ENCODE measurements at regions of chr1 and their contacts with region 1.

Region 1: DNA sequence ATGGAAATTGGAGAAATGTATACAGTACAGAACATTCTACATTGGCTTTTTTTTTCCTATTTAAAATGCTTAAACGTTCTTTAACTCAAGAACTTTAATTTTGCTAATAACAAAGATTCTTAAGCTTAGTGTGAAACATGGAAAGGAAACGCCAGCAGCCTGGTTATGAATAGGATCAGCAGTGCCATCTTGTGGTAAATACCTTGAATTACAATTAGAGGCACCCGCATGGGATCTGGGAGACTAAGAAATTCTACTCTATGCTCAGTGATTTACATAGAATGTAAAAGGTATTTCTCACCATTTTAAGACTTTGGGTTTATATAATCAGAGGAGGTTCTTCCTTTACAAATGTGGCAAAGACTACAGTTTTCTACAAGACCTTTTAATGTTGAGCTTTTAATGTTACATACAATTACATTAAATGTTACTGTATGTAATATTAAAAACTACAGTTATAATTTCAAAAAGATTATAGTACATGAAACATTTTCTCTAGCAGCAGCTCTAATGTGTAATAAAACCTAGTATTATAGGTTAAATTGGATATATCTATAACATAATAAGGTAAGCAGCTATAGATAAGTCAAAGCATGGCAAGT is 32.1 kb upstream of the APOBEC4 start:
- DNase-seq: peak; percentile 37
- H3K4me3 Mint-ChIP-seq: no peak overlapping the region
- H3K27ac Mint-ChIP-seq: no peak overlapping the region
- H3K4me1 Mint-ChIP-seq: no peaks in the 10 kb centered on the region
- H3K27me3 Mint-ChIP-seq: peaks cover 11% of the 10 kb centered on the region

Region 2: GRCh38 chr1:183281553-183282091 is 403.6 kb before region 1 on chr1:
- CTCF ChIA-PET with region 1: interaction called, 10 read pairs
- DNase-seq: peak; percentile 84
- H3K4me3 Mint-ChIP-seq: no peak overlapping the region
- H3K27ac Mint-ChIP-seq: no peak overlapping the region
- H3K4me1 Mint-ChIP-seq: peaks cover 23% of the 10 kb centered on the region
- H3K27me3 Mint-ChIP-seq: peaks cover 24% of the 10 kb centered on the region

Region 3: DNA sequence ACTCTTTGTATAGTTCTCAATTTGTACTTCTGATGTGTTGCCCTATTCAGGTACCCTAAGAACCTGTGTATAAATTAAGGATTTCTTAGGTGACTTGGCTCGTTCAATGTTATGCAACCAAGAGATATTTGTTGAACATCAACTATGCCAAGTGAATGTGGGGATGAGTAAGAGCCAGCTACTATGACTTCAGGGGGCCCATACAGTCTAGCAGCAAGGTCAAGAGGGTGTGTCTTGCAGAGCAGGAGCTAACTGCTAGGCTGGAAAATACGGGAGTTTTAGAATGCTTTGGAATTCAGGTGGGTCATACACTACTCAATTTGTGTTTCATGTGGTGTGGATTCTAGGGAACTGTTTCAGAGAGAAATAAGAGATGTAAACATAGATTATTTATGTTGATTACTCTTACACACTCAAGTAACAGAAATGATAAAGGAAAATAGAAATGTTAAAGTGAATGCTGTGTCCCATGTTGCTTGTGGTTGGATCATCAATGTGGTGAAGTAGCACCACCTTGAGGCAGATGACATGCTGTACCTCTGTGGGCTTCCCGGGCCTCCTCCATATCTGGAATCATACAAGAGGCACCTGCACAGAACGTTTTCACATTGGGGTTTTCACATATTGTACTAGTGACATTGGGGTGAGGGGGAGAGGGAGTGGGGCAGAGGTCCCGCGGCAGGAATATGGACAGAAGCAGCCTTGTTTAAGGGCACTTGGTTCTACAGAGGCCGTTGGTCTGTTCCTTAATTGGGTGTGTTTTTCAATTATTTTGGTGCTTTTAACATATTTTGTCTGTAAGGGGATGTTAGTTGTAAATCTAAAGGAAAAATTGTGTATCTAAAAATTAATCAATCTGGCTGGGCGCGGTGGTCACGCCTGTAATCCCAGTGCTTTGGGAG is 62.1 kb before region 1 on chr1:
- CTCF ChIA-PET with region 1: no interaction called
- DNase-seq: peak; percentile 67
- H3K4me3 Mint-ChIP-seq: no peak overlapping the region
- H3K27ac Mint-ChIP-seq: no peak overlapping the region
- H3K4me1 Mint-ChIP-seq: peaks cover 7% of the 10 kb centered on the region
- H3K27me3 Mint-ChIP-seq: no peaks in the 10 kb centered on the region

Region 4: GRCh38 chr1:183635606-183636333 is 49.4 kb before region 1 on chr1 and contains the start of gene ARPC5:
- CTCF ChIA-PET with region 1: interaction called, 17 read pairs
- DNase-seq: peak; percentile 96
- H3K4me3 Mint-ChIP-seq: peak within 1 kb of the TSS; percentile 97
- H3K27ac Mint-ChIP-seq: peak within 1 kb of the TSS; percentile 98
- H3K4me1 Mint-ChIP-seq: peaks cover 32% of the 10 kb centered on the region
- H3K27me3 Mint-ChIP-seq: peaks cover 27% of the 10 kb centered on the region

Region 5: DNA sequence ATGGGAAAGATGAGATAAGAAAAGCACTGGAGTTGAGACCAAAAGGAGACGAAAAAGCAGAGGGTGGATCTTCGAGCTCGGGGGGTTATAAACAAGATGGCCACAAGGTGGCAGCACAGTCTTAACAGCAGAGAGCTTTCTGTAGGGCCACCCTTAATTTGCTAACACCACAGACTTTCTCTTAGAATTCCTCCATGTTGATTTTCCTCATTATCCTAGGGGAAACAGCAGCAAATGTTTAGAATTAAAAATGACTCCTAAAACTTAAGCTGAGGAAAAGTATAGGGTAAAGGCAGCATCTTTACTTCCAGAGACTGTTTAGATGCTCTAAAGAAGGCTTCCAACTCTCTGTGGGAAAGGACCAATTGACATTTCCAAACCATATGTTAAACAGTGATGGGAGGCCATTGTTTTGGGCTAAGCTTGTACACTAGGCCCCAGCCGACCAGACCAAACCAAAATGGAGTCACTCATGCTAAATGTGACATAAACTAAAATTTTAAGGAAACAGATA is 29.6 kb before region 1 on chr1:
- CTCF ChIA-PET with region 1: interaction called, 58 read pairs
- DNase-seq: peak; percentile 80
- H3K4me3 Mint-ChIP-seq: no peak overlapping the region
- H3K27ac Mint-ChIP-seq: no peak overlapping the region
- H3K4me1 Mint-ChIP-seq: peaks cover 34% of the 10 kb centered on the region
- H3K27me3 Mint-ChIP-seq: no peaks in the 10 kb centered on the region

Region 6: GRCh38 chr1:183702087-183702812 is 17.0 kb after region 1 on chr1:
- CTCF ChIA-PET with region 1: no interaction called
- DNase-seq: no peak
- H3K4me3 Mint-ChIP-seq: no peak overlapping the region
- H3K27ac Mint-ChIP-seq: no peak overlapping the region
- H3K4me1 Mint-ChIP-seq: peaks cover 4% of the 10 kb centered on the region
- H3K27me3 Mint-ChIP-seq: no peaks in the 10 kb centered on the region

Region 7: GRCh38 chr1:183761871-183762270 is 76.7 kb after region 1 on chr1:
- CTCF ChIA-PET with region 1: no interaction called
- DNase-seq: no peak
- H3K4me3 Mint-ChIP-seq: no peak overlapping the region
- H3K27ac Mint-ChIP-seq: no peak overlapping the region
- H3K4me1 Mint-ChIP-seq: no peaks in the 10 kb centered on the region
- H3K27me3 Mint-ChIP-seq: no peaks in the 10 kb centered on the region

Region 8: GRCh38 chr1:183915625-183916510 is 230.7 kb after region 1 on chr1:
- CTCF ChIA-PET with region 1: interaction called, 47 read pairs
- DNase-seq: peak; percentile 78
- H3K4me3 Mint-ChIP-seq: no peak overlapping the region
- H3K27ac Mint-ChIP-seq: no peak overlapping the region
- H3K4me1 Mint-ChIP-seq: peaks cover 18% of the 10 kb centered on the region
- H3K27me3 Mint-ChIP-seq: no peaks in the 10 kb centered on the region

Measured in activated naive CD4-positive, alpha-beta T cell treated with anti-CD3 and anti-CD28 coated beads, Interleukin-2, amount 10 ng/mL, durations not matched to agents 7 days and 5 days (primary cell).